GM13976 (cell line): ENCODE measurements at regions of chr1 and their contacts with region 1.

Region 1: GRCh38 chr1:211323156-211324063 is 3.2 kb upstream of the TRAF5 start:
- DNase-seq: peak; percentile 65
- CTCF ChIP-seq: peak; percentile 83

Region 2: GRCh38 chr1:211476200-211476849 is 152.9 kb after region 1 on chr1:
- in situ Hi-C with region 1: loop called (anchors 10 kb)
- DNase-seq: peak; percentile 79
- CTCF ChIP-seq: peak; percentile 69

Region 3: GRCh38 chr1:211514030-211514754 is 190.8 kb after region 1 on chr1:
- in situ Hi-C with region 1: loop called (anchors 10 kb)
- DNase-seq: peak; percentile 92
- CTCF ChIP-seq: peak; percentile 82

Region 4: GRCh38 chr1:211654838-211655787 is 331.7 kb after region 1 on chr1:
- in situ Hi-C with region 1: loop called (anchors 10 kb)
- DNase-seq: peak; percentile 81
- CTCF ChIP-seq: peak; percentile 89